ENCODE measurements at regions of chr3 and their contacts with region 1.

Region 1: DNA sequence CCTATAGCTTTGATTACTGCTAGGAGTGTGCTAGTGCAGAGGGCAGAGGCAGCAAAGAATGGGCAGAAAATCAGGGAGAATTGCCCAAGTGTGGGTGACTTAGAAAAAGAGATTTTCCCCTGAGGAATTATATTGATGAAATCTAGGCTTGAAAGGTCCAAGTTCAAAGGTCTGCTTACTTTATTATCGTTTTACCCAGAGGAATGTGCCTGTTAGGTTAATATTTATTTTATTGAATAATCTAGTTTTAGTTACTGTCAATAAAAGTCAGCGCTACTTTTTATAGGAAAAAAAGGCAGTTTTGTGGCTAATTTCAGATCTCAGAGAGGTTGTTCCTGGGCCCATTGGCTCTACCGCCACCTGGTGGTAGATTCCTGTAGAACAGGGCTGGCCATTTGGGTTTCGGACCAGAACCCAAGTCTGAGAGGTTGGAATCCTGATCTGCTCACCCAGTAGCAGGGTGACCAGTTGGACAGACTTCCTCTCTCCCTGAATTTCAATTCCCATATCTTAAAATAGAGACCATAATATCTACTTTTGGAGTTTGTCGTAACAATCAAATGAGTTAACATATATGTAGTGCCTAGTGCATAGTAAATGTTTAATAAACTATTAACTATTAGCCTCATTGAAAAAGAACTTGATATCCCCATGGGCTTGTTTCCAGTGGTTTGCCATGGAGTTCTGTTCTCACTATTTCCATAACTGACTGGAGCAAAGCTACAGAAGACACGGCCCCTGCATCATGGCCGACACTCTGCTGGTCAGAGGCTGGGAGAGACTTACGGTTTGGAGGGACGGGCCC is 62.7 kb upstream of the ZNF148 start:
- DNase-seq: peak; percentile 13
- H3K4me3 ChIP-seq: no peak overlapping the region
- H3K27ac ChIP-seq: no peak overlapping the region
- H3K4me1 ChIP-seq: peaks cover 14% of the 10 kb centered on the region
- H3K27me3 ChIP-seq: no peaks in the 10 kb centered on the region
- CTCF ChIP-seq: peak; percentile 97

Region 2: DNA sequence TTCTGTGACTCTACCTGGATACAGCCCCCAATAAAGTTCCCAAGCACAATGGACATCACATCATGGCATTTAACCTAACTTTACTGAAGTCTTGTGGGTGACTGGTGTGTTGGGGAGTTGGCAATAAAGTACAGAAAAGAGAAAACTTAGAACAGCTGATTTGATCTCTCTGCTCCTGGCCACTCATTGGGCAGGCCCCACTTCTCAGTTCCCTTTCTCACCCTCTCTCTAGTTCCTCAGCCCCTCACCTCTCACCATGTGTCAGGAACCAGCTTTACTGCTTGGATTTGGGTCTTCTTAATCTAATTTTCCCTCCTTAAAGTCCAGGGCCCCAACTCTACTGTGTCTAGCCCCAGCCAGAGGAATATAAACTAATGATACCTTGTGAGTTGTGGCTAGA is 502.6 kb before region 1 on chr3:
- CTCF ChIA-PET with region 1: no interaction called
- dilution Hi-C with region 1: no loop called
- in situ Hi-C with region 1: loop called in 1 of 2 experiments (anchors 10 kb)
- intact Hi-C with region 1: no loop called
- DNase-seq: no peak
- H3K4me3 ChIP-seq: no peak overlapping the region
- H3K27ac ChIP-seq: no peak overlapping the region
- H3K4me1 ChIP-seq: no peaks in the 10 kb centered on the region
- H3K27me3 ChIP-seq: no peaks in the 10 kb centered on the region
- CTCF ChIP-seq: no peak

Region 3: DNA sequence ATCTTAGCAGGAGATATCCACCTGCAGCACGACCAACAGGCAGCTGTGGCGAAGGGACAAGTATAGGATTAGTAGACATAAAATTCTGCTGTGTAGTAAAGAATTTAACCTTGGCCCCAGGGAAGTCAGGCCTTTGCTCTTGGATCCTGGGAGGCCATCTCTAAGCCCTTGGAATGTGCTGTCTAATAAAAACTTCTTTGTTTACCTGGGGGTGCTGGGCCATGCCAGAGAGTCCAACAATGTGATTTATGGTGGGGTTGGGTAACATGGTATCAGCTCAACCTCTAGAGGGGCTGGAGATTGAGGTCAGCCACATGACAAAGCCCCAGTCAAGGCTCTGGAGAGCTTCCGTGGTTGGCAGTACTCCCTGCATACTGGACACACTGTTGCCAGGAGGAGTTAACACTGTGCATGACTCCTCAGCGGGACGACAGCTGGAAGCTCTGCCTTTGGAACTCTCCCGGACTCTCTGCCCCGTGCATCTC is 434.4 kb before region 1 on chr3:
- CTCF ChIA-PET with region 1: interaction called, 6 read pairs
- dilution Hi-C with region 1: no loop called
- in situ Hi-C with region 1: loop called (anchors 10 to 25 kb)
- intact Hi-C with region 1: no loop called
- DNase-seq: no peak
- H3K4me3 ChIP-seq: no peak overlapping the region
- H3K27ac ChIP-seq: no peak overlapping the region
- H3K4me1 ChIP-seq: no peaks in the 10 kb centered on the region
- H3K27me3 ChIP-seq: no peaks in the 10 kb centered on the region
- CTCF ChIP-seq: no peak

Region 4: GRCh38 chr3:125150525-125151441 is 287.1 kb before region 1 on chr3:
- CTCF ChIA-PET with region 1: no interaction called
- dilution Hi-C with region 1: no loop called
- in situ Hi-C with region 1: no loop called
- intact Hi-C with region 1: loop called (anchors 2 kb)
- DNase-seq: no peak
- H3K4me3 ChIP-seq: no peak overlapping the region
- H3K27ac ChIP-seq: no peak overlapping the region
- H3K4me1 ChIP-seq: no peaks in the 10 kb centered on the region
- H3K27me3 ChIP-seq: no peaks in the 10 kb centered on the region
- CTCF ChIP-seq: peak; percentile 45 to 67

Region 5: DNA sequence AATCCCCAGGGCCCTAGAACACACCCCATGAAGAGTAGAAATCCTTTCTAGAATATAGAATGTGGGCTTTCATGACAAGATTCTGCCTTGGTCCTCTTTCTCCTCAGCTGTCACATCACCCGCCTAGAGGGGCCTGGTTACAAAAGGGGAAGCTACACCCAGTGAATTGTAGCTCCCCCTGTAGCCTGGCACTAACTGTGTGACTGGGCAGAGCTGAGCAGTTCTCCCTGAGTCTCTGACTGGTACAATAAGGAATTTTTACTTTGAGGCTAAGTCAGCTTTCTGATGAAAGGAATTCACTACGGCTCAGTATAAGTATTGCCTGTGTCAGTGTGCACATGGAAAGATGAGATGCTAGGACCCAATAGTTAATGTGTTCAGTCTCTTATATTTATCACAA is 34.0 kb before region 1 on chr3:
- CTCF ChIA-PET with region 1: interaction called, 15 read pairs
- dilution Hi-C with region 1: no loop called
- in situ Hi-C with region 1: no loop called
- intact Hi-C with region 1: no loop called
- DNase-seq: no peak
- H3K4me3 ChIP-seq: no peak overlapping the region
- H3K27ac ChIP-seq: no peak overlapping the region
- H3K4me1 ChIP-seq: no peaks in the 10 kb centered on the region
- H3K27me3 ChIP-seq: peaks cover 2% of the 10 kb centered on the region
- CTCF ChIP-seq: no peak